CD4-positive, alpha-beta memory T cell (primary cell): ENCODE measurements at regions of chr9 and their contacts with region 1.

Region 1: GRCh38 chr9:21326526-21327139 is 8.6 kb downstream of the KLHL9 start:
- DNase-seq: peak in 4 of 5 donors; percentile 57 to 66 (median 61)
- H3K4me3 ChIP-seq: no peak overlapping the region
- H3K4me3 Mint-ChIP-seq: peak overlapping the region in 4 of 8 donors; percentile 36 to 74 (median 44)
- H3K27ac ChIP-seq: no peak overlapping the region
- H3K27ac Mint-ChIP-seq: peak overlapping the region in 4 of 7 donors; percentile 24 to 74 (median 48)
- H3K4me1 ChIP-seq: peaks cover 49% of the 10 kb centered on the region
- H3K4me1 Mint-ChIP-seq: peaks cover 34 to 59% (median 52%) of the 10 kb centered on the region in 4 donors
- H3K27me3 ChIP-seq: no peaks in the 10 kb centered on the region
- H3K27me3 Mint-ChIP-seq: no peaks in the 10 kb centered on the region

Region 2: DNA sequence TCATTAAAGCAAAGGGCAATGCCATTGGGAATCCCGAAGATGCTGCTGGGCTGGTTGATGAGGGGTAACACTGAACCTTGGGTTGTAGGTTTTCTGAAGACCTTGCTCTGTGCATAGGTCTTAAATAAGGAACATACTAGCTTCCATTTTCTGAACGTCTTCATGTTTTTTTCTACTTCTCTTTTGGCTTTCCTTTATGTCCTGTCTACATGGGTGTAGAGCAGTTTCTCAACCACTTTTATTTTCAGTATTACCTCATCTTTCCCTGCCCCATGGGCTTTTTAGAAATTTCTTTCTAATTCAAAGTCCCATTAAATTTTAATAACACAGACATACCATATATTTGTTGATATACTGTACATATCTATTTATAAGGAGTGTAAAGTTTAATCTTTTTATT is 86.7 kb before region 1 on chr9 and contains the start of gene IFNA14:
- CTCF ChIA-PET with region 1: interaction called, 7 read pairs
- POLR2A ChIA-PET with region 1: no interaction called
- intact Hi-C with region 1: loop called (anchors 5 kb)
- DNase-seq: no peak
- H3K4me3 ChIP-seq: no peak within 1 kb of the TSS
- H3K4me3 Mint-ChIP-seq: no peak within 1 kb of the TSS
- H3K27ac ChIP-seq: no peak within 1 kb of the TSS
- H3K27ac Mint-ChIP-seq: no peak within 1 kb of the TSS
- H3K4me1 ChIP-seq: peaks cover 5% of the 10 kb centered on the region
- H3K4me1 Mint-ChIP-seq: peaks cover 4 to 12% (median 7%) of the 10 kb centered on the region in 4 donors
- H3K27me3 ChIP-seq: no peaks in the 10 kb centered on the region
- H3K27me3 Mint-ChIP-seq: peaks cover 2 to 15% of the 10 kb centered on the region in 2 donors
- total RNA-seq, gene IFNA14: not detected

Region 3: DNA sequence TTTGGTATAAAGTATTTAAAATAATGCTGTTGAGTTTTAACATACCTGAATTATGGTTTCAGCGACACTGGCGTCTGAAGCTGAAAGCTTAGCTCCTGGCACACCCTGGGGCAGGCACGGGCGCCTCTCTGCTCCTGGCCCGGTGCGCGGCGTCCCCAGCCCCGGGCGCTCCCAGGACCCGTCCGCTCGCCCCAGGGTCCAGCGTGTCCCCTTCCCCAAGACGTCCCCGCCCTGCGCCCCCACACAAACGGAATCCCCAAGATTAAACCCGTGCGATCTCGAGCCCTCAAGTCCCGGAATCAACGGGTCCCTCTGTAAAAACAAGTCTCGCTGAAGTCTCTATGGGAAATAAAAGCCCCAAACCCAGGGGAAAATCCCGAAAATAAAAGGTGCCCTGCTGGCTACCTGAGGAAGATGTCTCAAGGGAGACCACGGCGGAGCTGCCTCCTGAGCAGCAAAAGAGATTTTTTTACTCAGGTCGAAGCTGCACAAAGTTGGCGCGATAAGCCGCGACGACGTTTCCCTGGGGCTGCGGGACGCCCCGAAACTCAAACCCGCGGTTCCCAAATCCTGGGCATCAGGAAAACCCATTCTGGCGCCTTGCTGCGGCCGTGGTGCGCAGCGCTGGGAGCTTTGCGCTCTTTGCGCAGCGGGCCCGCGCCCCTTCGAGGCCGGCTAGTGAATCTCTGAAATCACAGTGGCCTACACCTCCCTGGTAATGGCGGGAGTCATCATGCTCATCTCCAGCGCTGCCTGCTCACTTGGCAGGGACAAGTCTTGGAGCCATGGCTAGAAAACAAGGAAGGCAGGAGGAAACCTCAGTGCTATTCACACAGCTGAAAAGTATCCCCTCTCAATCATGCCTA is 76.0 kb after region 1 on chr9:
- CTCF ChIA-PET with region 1: interaction called, 30 read pairs
- POLR2A ChIA-PET with region 1: no interaction called
- intact Hi-C with region 1: no loop called
- DNase-seq: no peak
- H3K4me3 ChIP-seq: no peak overlapping the region
- H3K4me3 Mint-ChIP-seq: peak overlapping the region; percentile 28 to 77 (median 70)
- H3K27ac ChIP-seq: no peak overlapping the region
- H3K27ac Mint-ChIP-seq: no peak overlapping the region
- H3K4me1 ChIP-seq: peaks cover 9% of the 10 kb centered on the region
- H3K4me1 Mint-ChIP-seq: peaks cover 3 to 12% (median 7%) of the 10 kb centered on the region in 4 donors
- H3K27me3 ChIP-seq: peaks cover 11% of the 10 kb centered on the region
- H3K27me3 Mint-ChIP-seq: peaks cover 34% of the 10 kb centered on the region in 2 donors

Region 4: DNA sequence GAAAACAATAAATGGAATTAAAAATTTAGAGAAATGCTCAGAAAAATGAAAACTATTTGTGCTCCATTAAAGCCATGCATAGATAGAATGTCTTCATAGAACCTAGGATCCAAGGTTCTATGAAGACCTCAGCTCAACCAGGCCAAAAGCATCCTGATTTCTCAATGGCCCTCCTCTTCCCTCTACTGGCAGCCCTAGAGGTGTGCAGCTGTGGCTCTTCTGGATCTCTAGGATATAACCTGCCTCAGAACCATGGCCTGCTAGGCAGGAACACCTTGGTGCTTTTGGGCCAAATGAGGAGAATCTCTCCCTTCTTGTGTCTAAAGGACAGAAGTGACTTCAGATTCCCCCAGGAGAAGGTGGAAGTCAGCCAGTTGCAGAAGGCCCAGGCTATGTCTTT is 128.7 kb after region 1 on chr9:
- CTCF ChIA-PET with region 1: interaction called, 7 read pairs
- POLR2A ChIA-PET with region 1: no interaction called
- intact Hi-C with region 1: loop called (anchors 1 kb)
- DNase-seq: peak; percentile 39 to 45 (median 44)
- H3K4me3 ChIP-seq: no peak overlapping the region
- H3K4me3 Mint-ChIP-seq: no peak overlapping the region
- H3K27ac ChIP-seq: no peak overlapping the region
- H3K27ac Mint-ChIP-seq: no peak overlapping the region
- H3K4me1 ChIP-seq: no peaks in the 10 kb centered on the region
- H3K4me1 Mint-ChIP-seq: no peaks in the 10 kb centered on the region
- H3K27me3 ChIP-seq: no peaks in the 10 kb centered on the region
- H3K27me3 Mint-ChIP-seq: peaks cover 10 to 16% of the 10 kb centered on the region in 2 donors

Region 5: GRCh38 chr9:22457446-22457845 is 1130.8 kb after region 1 on chr9:
- CTCF ChIA-PET with region 1: no interaction called
- POLR2A ChIA-PET with region 1: no interaction called
- intact Hi-C with region 1: no loop called
- DNase-seq: no peak
- H3K4me3 ChIP-seq: no peak overlapping the region
- H3K4me3 Mint-ChIP-seq: no peak overlapping the region
- H3K27ac ChIP-seq: no peak overlapping the region
- H3K27ac Mint-ChIP-seq: no peak overlapping the region
- H3K4me1 ChIP-seq: no peaks in the 10 kb centered on the region
- H3K4me1 Mint-ChIP-seq: peaks cover 0 to 2% (median 0%) of the 10 kb centered on the region in 4 donors
- H3K27me3 ChIP-seq: peaks cover 4% of the 10 kb centered on the region
- H3K27me3 Mint-ChIP-seq: peaks cover 4 to 27% of the 10 kb centered on the region in 2 donors